Transverse colon (tissue), 4 donors: ENCODE measurements at regions of chr11 and their contacts with region 1.

Region 1: GRCh38 chr11:16945671-16946469 is 68.3 kb downstream of the PLEKHA7 start:
- DNase-seq: peak; percentile 76
- H3K4me3 ChIP-seq: no peak overlapping the region
- H3K27ac ChIP-seq: no peak overlapping the region
- H3K4me1 ChIP-seq: peaks cover 0 to 10% (median 0%) of the 10 kb centered on the region in 4 donors
- H3K27me3 ChIP-seq: no peaks in the 10 kb centered on the region
- CTCF ChIP-seq: peak; percentile 47 to 77 (median 69)
- EP300 ChIP-seq: no peak
- POLR2A ChIP-seq: no peak

Region 2: GRCh38 chr11:16993495-16993894 is 47.6 kb after region 1 on chr11:
- in situ Hi-C with region 1: no loop called
- intact Hi-C with region 1: no loop called
- DNase-seq: no peak
- H3K4me3 ChIP-seq: no peak overlapping the region
- H3K27ac ChIP-seq: peak overlapping the region in 3 of 4 donors; percentile 37 to 55 (median 41)
- H3K4me1 ChIP-seq: peaks cover 8 to 63% (median 32%) of the 10 kb centered on the region in 4 donors
- H3K27me3 ChIP-seq: no peaks in the 10 kb centered on the region
- CTCF ChIP-seq: no peak
- EP300 ChIP-seq: no peak
- POLR2A ChIP-seq: no peak

Region 3: DNA sequence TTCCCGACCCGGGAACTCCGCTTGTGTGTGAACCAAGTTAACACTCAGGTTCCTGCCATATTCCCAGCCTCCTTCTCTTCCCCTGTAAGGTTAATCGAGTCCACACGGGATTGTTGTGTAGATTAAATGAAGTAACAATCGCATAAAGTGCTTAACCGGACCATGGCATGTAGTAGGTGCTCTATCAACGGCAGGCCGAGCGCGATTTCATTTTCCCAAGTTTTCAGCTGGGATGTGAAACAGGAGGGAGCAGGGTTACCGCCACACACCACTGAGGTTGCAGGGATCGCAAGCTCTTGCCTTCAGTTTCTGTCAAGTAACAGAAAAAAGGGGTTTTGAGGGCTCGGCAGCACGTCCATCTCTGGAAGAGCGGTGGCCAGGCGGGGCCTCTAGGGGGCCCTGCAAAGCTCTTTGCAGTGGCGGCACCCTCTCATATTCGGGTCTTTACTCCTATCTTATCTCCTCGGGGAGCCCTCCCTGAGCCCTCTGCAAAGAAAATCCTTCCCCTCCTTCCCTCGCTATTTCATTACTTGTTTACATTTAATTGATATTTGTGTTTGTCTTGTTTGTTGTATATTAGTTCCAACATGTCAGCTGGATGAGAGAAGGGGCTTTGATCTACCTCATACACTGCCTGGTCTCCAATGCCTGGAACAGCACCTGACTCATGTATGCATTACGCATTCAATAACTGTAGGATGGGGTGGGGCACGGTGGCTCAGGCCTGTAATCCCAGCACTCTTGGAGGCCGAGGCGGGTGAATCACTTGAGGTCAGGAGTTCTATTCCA is 69.2 kb after region 1 on chr11:
- in situ Hi-C with region 1: loop called in 1 of 4 experiments (anchors 5 kb)
- intact Hi-C with region 1: no loop called
- DNase-seq: peak; percentile 71
- H3K4me3 ChIP-seq: peak overlapping the region; percentile 38 to 85 (median 70)
- H3K27ac ChIP-seq: peak overlapping the region; percentile 77 to 90 (median 88)
- H3K4me1 ChIP-seq: peaks cover 0 to 23% (median 10%) of the 10 kb centered on the region in 4 donors
- H3K27me3 ChIP-seq: peaks cover 13% of the 10 kb centered on the region
- CTCF ChIP-seq: peak; percentile 42 to 60 (median 50)
- EP300 ChIP-seq: no peak
- POLR2A ChIP-seq: peak; percentile 54